Upper lobe of right lung (tissue), 1 donor: ENCODE measurements at regions of chr1 and their contacts with region 1.

Region 1: GRCh38 chr1:9816199-9816598 is 7.6 kb downstream of the CLSTN1 start:
- DNase-seq: no peak
- ATAC-seq: no peak
- H3K4me3 ChIP-seq: no peak overlapping the region
- H3K27ac ChIP-seq: no peak overlapping the region
- H3K4me1 ChIP-seq: peaks cover 3% of the 10 kb centered on the region
- H3K27me3 ChIP-seq: no peaks in the 10 kb centered on the region
- CTCF ChIP-seq: no peak

Region 2: DNA sequence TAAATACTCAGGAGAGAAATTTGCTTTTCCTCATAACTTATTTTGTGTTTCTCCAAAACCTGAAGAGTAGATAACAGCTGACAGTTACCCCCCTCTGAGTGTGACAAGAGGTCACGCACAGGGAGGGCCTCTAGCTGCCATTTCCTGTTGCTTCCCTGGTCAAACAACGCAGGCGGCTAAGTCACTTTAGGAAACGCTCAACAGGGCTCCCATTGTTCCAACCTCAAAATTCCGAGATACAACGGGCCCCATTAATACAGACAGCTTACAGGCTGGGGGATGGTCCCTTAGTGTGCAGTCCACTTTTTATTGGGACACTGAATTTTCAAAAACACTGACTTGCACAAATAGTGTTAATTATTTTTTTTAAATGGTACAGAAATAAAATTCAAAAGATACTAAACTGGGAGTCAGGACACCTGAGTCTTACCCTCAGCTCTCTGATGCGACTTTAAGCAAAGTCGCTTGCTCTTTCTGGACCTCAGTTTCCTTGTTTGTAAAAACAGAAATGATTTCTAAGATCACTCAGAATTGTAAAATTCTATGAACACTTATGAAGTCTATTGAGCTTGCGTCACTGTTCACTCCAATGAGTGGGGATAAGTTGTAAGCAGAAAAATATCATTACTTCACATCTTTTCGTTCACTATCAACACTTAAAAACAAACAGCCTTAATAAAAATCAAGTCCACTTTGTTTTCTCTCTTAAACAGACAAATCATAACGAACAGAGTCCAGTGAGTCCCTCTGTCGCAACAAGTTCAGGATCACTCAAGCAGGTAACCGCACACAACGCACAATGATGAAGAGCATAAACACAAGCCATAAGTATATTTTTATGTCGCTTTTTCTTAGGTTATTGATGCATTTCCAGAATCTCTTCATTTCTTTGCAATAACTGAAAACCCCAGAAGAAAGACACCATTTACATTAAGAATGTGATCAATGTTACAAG is 113.5 kb after region 1 on chr1:
- intact Hi-C with region 1: no loop called
- DNase-seq: no peak
- ATAC-seq: no peak
- H3K4me3 ChIP-seq: no peak overlapping the region
- H3K27ac ChIP-seq: no peak overlapping the region
- H3K4me1 ChIP-seq: no peaks in the 10 kb centered on the region
- H3K27me3 ChIP-seq: no peaks in the 10 kb centered on the region
- CTCF ChIP-seq: no peak

Region 3: GRCh38 chr1:11180342-11180744 is 1364.1 kb after region 1 on chr1:
- intact Hi-C with region 1: loop called (anchors 10 kb)
- DNase-seq: no peak
- ATAC-seq: no peak
- H3K4me3 ChIP-seq: no peak overlapping the region
- H3K27ac ChIP-seq: no peak overlapping the region
- H3K4me1 ChIP-seq: peaks cover 7% of the 10 kb centered on the region
- H3K27me3 ChIP-seq: no peaks in the 10 kb centered on the region
- CTCF ChIP-seq: no peak